ENCODE measurements at regions of chr5 and their contacts with region 1.

Region 1: DNA sequence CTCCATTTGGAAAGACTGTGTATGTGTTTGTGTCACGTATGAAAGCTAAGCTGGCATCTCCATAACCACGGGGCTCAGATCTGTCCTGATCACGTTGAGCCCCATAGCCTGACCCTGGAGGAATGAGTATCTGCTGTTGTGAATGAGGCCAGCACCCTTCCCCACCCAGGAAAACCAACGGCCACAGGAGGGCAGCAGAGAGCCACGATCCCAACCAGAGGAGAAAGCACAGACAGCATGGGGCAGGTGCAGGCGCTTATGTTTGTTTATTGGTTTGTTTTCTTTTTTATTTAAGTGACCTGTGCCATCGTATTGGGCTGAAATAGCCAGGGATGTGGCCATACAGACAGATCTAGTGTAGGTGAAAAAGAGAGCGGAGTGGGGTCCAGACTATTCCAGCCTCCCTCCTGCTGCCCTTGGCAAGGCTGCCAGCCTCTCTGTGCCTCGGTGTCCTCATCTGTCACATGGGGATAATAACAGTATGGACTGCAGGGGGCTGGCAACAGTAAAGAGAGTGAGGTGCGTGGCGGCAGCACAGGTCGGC is 12.0 kb downstream of the OR2V2 start:
- DNase-seq: no peak
- ATAC-seq: peak; percentile 89
- H3K4me3 ChIP-seq: no peak overlapping the region
- H3K27ac ChIP-seq: no peak overlapping the region
- H3K4me1 ChIP-seq: peaks cover 25% of the 10 kb centered on the region
- H3K27me3 ChIP-seq: no peaks in the 10 kb centered on the region
- CTCF ChIP-seq: peak; percentile 86 to 97 (median 88)
- EP300 ChIP-seq: no peak
- POLR2A ChIP-seq: no peak
- RAD21 ChIP-seq: peak; percentile 95

Region 2: DNA sequence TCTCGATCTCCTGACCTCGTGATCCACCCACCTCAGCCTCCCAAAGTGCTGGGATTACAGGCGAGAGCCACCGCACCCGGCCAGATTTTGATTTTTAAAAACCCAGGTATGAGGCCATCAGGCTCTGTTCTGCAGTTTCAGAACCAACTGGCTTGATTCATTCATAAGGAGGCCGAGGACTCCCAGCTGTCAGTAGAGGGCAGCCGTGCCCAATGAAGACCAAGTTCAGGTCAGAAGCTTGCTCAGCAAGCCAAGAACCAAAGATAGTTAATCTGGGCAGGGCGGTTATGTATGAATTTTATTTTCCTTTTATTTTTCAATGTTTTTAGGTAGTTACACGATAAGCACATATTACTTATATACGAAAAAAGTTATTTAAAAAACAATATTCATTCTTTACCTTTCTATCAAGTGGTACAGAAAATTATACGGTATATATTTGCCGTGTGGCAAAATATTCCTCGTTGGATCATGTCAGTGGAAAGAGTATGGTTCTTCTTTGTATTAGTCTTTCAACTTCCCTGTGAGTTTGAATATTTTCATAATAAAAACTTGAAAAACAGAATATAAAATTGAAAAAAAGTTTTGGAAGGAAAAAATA is 374.8 kb before region 1 on chr5:
- CTCF ChIA-PET with region 1: no interaction called
- POLR2A ChIA-PET with region 1: no interaction called
- RAD21 ChIA-PET with region 1: no interaction called
- SMC1A ChIA-PET with region 1: no interaction called
- in situ Hi-C with region 1: no loop called
- intact Hi-C with region 1: loop called (anchors 5 kb)
- DNase-seq: no peak
- ATAC-seq: peak; percentile 96
- H3K4me3 ChIP-seq: no peak overlapping the region
- H3K27ac ChIP-seq: no peak overlapping the region
- H3K4me1 ChIP-seq: no peaks in the 10 kb centered on the region
- H3K27me3 ChIP-seq: no peaks in the 10 kb centered on the region
- CTCF ChIP-seq: peak; percentile 78 to 95 (median 78); a peak in 5 of 6 replicates
- EP300 ChIP-seq: no peak
- POLR2A ChIP-seq: no peak
- RAD21 ChIP-seq: peak; percentile 94

Region 3: GRCh38 chr5:180802325-180803180 is 356.8 kb before region 1 on chr5 and contains the start of gene MGAT1:
- CTCF ChIA-PET with region 1: interaction called, 5 read pairs
- POLR2A ChIA-PET with region 1: no interaction called
- RAD21 ChIA-PET with region 1: no interaction called
- SMC1A ChIA-PET with region 1: interaction called, 3 read pairs
- in situ Hi-C with region 1: loop called (anchors 5 kb)
- intact Hi-C with region 1: loop called (anchors 10 kb)
- DNase-seq: no peak
- ATAC-seq: peak; percentile 72
- H3K4me3 ChIP-seq: peak within 1 kb of the TSS; percentile 97
- H3K27ac ChIP-seq: peak within 1 kb of the TSS; percentile 94
- H3K4me1 ChIP-seq: peaks cover 43% of the 10 kb centered on the region
- H3K27me3 ChIP-seq: no peaks in the 10 kb centered on the region
- CTCF ChIP-seq: no peak
- EP300 ChIP-seq: no peak
- POLR2A ChIP-seq: peak; percentile 89
- RAD21 ChIP-seq: no peak
- polyA plus RNA-seq, gene MGAT1: 3.1 to 7.7 TPM

Region 4: GRCh38 chr5:180810210-180810958 is 349.0 kb before region 1 on chr5:
- CTCF ChIA-PET with region 1: interaction called, 5 read pairs
- POLR2A ChIA-PET with region 1: interaction called, 3 read pairs
- RAD21 ChIA-PET with region 1: interaction called, 3 read pairs
- SMC1A ChIA-PET with region 1: interaction called, 4 read pairs
- in situ Hi-C with region 1: no loop called
- intact Hi-C with region 1: loop called (anchors 10 kb)
- DNase-seq: peak; percentile 88
- ATAC-seq: peak; percentile 83
- H3K4me3 ChIP-seq: peak overlapping the region; percentile 97
- H3K27ac ChIP-seq: peak overlapping the region; percentile 95
- H3K4me1 ChIP-seq: peaks cover 31% of the 10 kb centered on the region
- H3K27me3 ChIP-seq: no peaks in the 10 kb centered on the region
- CTCF ChIP-seq: no peak
- EP300 ChIP-seq: no peak
- POLR2A ChIP-seq: peak; percentile 94
- RAD21 ChIP-seq: no peak

Region 5: GRCh38 chr5:180975338-180975737 is 184.0 kb before region 1 on chr5:
- CTCF ChIA-PET with region 1: no interaction called
- POLR2A ChIA-PET with region 1: no interaction called
- RAD21 ChIA-PET with region 1: interaction called, 4 read pairs
- SMC1A ChIA-PET with region 1: interaction called, 3 read pairs
- in situ Hi-C with region 1: no loop called
- intact Hi-C with region 1: loop called (anchors 10 kb)
- DNase-seq: peak; percentile 83
- ATAC-seq: peak; percentile 99
- H3K4me3 ChIP-seq: no peak overlapping the region
- H3K27ac ChIP-seq: peak overlapping the region; percentile 33; the same call in 1 of the 2 replicates
- H3K4me1 ChIP-seq: peaks cover 12% of the 10 kb centered on the region
- H3K27me3 ChIP-seq: no peaks in the 10 kb centered on the region
- CTCF ChIP-seq: no peak
- EP300 ChIP-seq: peak; percentile 22 to 27; a peak in 2 of 4 replicates
- POLR2A ChIP-seq: no peak
- RAD21 ChIP-seq: no peak

Region 6: DNA sequence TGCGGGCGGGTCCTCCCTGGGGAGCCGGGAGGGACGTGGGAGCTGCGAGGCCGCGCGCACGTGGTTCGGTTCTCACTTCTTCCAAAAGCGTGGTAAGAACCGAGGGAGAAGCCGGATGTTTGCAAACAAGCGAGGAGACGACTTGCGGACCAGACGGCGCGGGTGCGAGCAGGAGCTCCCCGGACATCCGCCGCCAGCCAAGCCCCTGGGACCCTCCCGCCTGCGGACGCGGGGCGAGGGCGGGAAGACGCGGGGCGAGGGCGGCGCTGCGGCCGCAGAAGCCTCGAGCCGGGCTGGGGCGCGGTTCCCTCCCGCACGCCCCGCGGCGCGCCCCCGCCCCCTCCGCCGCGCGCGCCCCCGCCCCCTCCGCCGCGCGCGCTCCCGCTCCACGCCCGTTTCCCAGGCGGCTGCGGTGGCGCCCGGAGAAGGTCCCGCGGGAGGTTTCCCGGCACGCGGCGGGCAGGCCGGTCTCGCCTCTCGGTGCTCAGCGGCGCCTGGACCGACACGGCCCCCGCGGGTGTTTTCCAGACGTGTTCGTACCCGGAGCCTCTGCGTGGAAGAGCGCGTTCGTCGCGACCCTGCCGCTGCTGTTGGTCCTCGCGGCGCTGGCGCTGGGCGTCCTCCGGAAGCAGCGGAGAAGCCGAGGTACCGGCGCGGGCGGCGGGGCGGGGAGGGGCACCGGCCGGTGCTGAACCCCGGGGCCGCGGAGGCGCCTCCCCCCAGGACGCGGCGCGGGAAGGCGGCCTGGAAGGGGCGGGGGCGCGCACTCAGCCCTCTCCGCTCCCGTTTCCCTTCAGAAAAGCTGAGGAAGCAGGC is 106.5 kb before region 1 on chr5:
- CTCF ChIA-PET with region 1: no interaction called
- POLR2A ChIA-PET with region 1: interaction called, 3 read pairs
- RAD21 ChIA-PET with region 1: interaction called, 3 read pairs
- SMC1A ChIA-PET with region 1: interaction called, 3 read pairs
- in situ Hi-C with region 1: no loop called
- intact Hi-C with region 1: loop called (anchors 10 kb)
- DNase-seq: no peak
- ATAC-seq: no peak
- H3K4me3 ChIP-seq: peak overlapping the region; percentile 57; the same call in 1 of the 2 replicates
- H3K27ac ChIP-seq: no peak overlapping the region
- H3K4me1 ChIP-seq: peaks cover 12% of the 10 kb centered on the region
- H3K27me3 ChIP-seq: peaks cover 5 to 7% of the 10 kb centered on the region in 2 experiments
- CTCF ChIP-seq: no peak
- EP300 ChIP-seq: no peak
- POLR2A ChIP-seq: no peak
- RAD21 ChIP-seq: no peak

Region 7: DNA sequence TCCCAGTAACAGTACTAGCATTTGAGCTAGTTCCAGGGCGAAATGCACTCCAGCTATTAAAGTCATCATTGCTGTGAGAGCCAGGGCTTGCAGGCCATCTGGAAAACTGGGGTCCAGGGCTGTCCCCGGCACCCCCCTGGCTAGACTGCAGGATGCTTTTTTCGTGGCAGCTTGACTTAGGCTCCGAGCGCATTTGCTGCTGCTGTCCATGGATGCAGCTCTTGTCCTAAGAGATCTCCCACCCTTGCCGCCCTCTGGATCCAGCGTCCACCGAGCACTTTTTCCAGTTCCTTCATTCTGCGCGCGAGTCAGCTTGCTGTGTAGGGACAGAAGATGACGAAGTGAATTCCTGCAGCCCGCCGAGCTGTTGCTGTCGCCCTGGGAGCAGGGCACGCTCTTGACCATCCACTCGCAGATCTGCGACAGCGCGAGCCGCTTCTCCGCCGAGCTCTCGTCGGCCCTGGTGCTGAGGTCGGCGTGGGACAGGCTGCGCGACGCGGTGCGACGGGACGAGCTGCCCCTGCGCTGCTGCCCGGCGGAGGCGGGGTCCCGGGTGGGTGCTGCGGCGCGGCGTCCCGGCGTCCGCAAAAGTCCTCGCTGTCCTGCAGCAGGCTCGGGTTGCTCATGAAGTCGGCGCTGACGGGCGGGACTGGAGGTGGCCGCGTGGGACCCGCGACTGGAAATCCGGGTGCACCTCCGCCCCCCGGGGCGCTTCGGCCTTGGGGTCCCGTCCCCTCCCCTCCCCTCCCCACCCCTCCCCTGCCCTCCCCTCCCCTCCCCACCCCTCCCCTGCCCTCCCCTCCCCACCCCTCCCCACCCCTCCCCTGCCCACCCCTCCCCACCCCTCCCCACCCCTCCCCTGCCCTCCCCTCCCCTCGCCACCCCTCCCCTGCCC is 59.0 kb before region 1 on chr5:
- CTCF ChIA-PET with region 1: interaction called, 3 read pairs
- POLR2A ChIA-PET with region 1: no interaction called
- RAD21 ChIA-PET with region 1: interaction called, 3 read pairs
- SMC1A ChIA-PET with region 1: no interaction called
- in situ Hi-C with region 1: no loop called
- intact Hi-C with region 1: loop called (anchors 10 kb)
- DNase-seq: no peak
- ATAC-seq: no peak
- H3K4me3 ChIP-seq: no peak overlapping the region
- H3K27ac ChIP-seq: no peak overlapping the region
- H3K4me1 ChIP-seq: no peaks in the 10 kb centered on the region; the same call in 1 of the 2 replicates
- H3K27me3 ChIP-seq: no peaks in the 10 kb centered on the region; a peak in 1 of 4 replicates
- CTCF ChIP-seq: no peak
- EP300 ChIP-seq: no peak
- POLR2A ChIP-seq: no peak
- RAD21 ChIP-seq: no peak

Region 8: DNA sequence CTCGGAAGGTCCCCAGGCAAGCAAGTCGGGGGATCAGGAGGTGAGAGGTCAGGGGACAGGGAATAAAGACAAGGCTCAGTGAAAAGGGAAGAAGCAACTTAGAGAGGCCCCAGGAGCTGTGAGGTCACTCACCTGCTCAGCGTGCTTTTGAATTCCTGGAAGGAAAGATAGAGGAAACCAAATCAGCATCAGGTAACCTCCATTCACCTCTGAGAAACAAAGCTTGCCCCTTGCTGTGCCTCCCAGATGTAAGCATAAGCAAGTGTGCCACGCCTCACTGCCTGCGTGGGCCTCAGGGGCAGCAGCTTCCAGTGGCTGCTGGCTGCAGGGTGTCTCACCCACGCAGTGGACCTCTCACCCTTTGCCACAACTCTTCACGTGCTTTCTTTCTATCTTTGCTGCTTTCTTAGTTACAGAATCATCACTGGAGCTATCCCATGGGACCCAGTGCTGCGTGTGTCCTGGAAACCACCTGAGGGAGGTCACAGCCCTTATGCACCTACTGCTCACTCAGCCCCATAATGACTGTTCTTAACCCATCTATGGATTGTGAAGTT is 39.7 kb after region 1 on chr5:
- CTCF ChIA-PET with region 1: no interaction called
- POLR2A ChIA-PET with region 1: no interaction called
- RAD21 ChIA-PET with region 1: no interaction called
- SMC1A ChIA-PET with region 1: no interaction called
- in situ Hi-C with region 1: no loop called
- intact Hi-C with region 1: no loop called
- DNase-seq: no peak
- ATAC-seq: peak; percentile 88
- H3K4me3 ChIP-seq: no peak overlapping the region
- H3K27ac ChIP-seq: no peak overlapping the region; the same call in 1 of the 2 replicates
- H3K4me1 ChIP-seq: peaks cover 19% of the 10 kb centered on the region
- H3K27me3 ChIP-seq: peaks cover 1 to 4% of the 10 kb centered on the region in 2 experiments; a peak in 2 of 4 replicates
- CTCF ChIP-seq: no peak
- EP300 ChIP-seq: peak; percentile 67 to 84; a peak in 3 of 4 replicates
- POLR2A ChIP-seq: no peak
- RAD21 ChIP-seq: no peak

Measured in GM12878 (cell line).